Right ventricle myocardium superior (tissue), 1 donor: ENCODE measurements at regions of chr2 and their contacts with region 1.

Region 1: GRCh38 chr2:13006829-13007717 is 290.3 kb downstream of the TRIB2 start:
- DNase-seq: no peak
- ATAC-seq: peak; percentile 92

Region 2: DNA sequence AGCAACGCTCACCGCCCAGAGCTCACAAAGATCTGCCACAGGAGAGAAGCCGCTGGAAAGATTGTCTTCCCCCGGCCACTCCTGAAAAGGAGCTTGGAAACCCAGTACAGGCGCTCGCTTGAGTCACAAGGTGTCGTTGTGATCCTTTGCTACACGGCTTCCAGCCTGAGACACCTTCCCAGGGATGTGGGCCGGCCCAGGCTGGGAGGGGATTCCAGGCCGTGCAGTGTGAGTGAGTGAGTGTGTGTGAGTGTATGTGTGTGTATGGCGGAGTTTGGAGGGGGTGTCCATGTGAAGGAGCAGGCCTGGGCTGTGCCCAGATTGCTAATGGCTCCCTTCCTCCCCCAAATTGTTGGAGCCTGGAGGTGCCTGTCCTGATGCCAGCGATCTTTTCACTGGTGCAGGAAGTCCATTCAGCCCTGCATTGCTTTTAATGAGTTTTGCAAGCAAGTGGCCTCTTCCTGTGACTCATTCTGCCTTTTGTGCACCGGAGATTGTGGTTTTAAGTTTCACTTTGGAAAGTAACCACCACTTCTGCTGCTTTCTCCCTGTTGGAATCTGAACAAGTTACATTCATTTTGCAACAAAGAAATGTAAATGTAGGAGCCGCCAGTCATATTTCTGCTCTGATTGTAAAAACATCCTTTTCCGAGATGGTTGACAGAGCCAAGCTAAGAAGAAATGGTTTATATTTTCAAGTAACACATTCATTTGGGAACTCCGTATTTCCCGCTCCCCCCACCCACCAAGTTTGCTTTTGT is 1176.9 kb before region 1 on chr2:
- intact Hi-C with region 1: loop called (anchors 5 kb)
- DNase-seq: peak; percentile 70
- ATAC-seq: peak; percentile 79

Region 3: DNA sequence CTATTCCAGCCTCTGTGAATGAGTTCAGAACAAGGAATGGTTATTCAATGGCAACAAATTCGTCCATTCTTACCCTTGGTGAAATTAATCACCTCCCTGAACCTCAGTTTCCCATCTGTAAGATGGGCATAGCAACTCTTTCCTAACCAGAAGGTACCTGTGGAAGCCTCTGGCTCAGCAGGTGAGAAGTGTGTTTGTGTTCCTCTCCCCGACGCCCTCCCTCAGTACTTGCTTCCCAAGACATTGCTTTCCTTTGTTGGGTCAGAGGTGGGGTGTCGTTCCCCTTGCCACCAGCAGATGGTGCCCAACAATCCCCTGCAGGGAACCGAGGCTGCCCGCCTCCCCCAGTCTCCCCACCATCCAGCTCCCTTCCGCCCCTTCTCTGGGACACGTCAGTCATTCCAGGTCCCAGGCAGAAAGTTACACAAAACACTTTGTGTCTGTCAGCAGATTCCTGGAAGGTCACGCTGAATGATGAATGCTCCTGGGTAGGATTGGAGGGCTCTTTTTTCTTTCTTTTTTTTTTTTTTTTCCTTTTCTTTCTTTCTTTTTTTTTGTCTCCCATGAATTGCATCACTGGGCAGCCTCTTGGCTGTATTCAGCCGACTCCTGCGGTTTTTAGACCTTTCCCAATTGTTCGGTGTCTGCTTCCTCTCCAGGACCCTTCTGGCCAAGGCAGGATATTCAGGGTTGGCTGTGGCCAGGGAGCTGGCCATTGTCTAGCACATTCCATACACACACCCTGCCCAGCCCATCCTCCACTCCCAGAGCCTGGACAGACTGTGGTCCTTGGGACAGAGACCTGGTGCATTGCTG is 1143.4 kb before region 1 on chr2:
- intact Hi-C with region 1: loop called (anchors 10 kb)
- DNase-seq: peak; percentile 89
- ATAC-seq: peak; percentile 94

Region 4: GRCh38 chr2:12416600-12416999 is 590.5 kb before region 1 on chr2:
- intact Hi-C with region 1: loop called (anchors 10 kb)
- DNase-seq: peak; percentile 73
- ATAC-seq: peak; percentile 59

Region 5: GRCh38 chr2:12807907-12808810 is 198.9 kb before region 1 on chr2:
- intact Hi-C with region 1: no loop called
- DNase-seq: no peak
- ATAC-seq: peak; percentile 77

Region 6: DNA sequence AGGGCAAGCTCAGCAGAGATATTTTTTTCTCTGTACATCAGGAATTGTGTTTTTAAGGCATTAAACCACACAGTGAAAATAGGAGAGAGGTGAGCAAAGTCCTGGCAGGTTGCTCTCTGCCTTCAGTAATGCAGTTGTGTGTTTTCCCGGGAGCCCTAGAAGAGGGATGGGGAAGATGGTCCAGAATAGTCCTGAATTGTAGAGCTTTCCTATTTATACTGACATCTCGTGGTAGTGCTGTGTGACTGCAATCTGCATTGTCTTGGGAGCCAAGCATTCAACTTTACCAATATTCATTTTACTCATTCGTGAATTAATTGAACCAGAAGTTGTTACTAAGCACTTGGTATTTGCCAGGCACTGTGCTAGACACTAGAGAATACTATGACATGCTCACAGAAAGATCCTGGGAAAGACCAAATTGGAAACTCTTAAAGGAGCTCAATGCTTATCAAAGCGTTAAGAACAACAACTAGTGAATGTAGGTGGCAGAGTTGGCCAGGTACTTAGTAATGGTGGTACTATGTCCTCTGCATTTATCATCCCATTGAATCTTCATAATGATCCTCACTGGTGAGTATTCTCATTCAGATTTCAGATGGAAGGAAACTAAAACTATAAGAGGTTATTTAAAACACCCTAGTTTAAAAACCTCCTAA is 75.8 kb before region 1 on chr2:
- intact Hi-C with region 1: loop called (anchors 10 kb)
- DNase-seq: no peak
- ATAC-seq: peak; percentile 90